ENCODE measurements at regions of chr7 and their contacts with region 1.

Region 1: DNA sequence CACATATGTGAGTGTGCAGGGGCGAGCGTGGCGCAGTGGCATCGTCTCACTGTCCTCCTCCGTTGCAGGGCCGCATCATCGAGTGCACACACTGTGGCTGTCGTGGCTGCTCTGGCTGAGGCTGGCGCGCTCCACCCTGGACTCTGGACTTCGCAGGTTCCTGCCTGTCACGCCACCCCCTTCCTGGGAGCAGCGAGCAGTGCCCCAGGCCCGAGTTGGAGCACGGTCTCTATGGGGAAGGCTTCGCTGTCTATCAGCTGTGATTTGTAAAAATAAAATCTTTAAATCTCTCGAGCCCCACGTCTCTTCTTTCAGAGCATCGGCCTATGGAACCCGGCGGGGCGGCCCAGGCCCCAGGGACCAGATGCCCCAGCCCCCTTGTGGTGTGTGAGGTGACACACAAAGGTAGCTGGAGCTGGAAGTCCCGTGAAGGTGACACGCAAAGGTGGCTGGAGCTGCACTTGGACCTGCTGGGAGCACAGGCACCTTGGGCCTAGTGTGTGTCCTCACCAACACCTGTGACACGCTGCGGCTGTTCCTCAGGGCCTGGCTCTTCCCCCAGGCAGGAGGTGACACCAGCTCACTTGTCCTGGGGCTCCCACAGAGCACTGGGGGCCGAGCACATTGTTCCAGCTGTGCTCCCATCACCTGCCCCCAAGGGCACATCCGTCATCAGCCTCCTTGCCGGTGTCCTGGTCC is 10.7 kb downstream of the BUD31 start:
- DNase-seq: no peak
- H3K4me3 ChIP-seq: no peak overlapping the region
- H3K27ac ChIP-seq: no peak overlapping the region
- H3K4me1 ChIP-seq: no peaks in the 10 kb centered on the region
- H3K27me3 ChIP-seq: no peaks in the 10 kb centered on the region
- CTCF ChIP-seq: no peak
- POLR2A ChIP-seq: no peak

Region 2: GRCh38 chr7:99364961-99365817 is 54.3 kb before region 1 on chr7:
- intact Hi-C with region 1: loop called in 1 of 2 experiments (anchors 5 kb)
- DNase-seq: peak in 3 of 7 donors; percentile 49 to 61 (median 51)
- H3K4me3 ChIP-seq: no peak overlapping the region
- H3K27ac ChIP-seq: no peak overlapping the region
- H3K4me1 ChIP-seq: no peaks in the 10 kb centered on the region
- H3K27me3 ChIP-seq: no peaks in the 10 kb centered on the region
- CTCF ChIP-seq: peak; percentile 28 to 54 (median 46)
- POLR2A ChIP-seq: no peak

Measured in adrenal gland (tissue), 19 donors.